Esophagus muscularis mucosa (tissue), 4 donors: ENCODE measurements at regions of chr2 and their contacts with region 1.

Region 1: DNA sequence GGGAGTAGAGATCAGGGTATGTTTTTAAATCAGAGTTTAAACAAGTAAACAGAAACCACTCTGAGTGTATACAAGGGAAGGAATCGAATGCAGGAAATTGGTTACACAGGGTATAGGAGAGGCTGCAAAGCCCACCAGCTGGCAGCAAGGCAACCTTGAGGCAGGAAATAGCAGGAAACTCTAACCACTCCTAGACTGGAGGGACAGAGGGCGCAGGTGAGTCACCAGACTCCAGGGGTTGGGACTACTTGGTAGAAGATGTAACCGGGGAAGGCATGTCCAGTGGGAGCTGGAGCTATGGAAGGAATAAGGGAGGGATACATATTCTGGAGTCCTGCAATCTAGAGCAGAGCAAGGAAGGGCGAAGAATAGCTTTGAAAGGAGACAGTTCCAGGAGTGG is 152.3 kb downstream of the MEIS1 start:
- DNase-seq: no peak
- H3K4me3 ChIP-seq: no peak overlapping the region
- H3K27ac ChIP-seq: peak overlapping the region in 1 of 4 donors; percentile 28
- H3K4me1 ChIP-seq: peaks cover 0 to 34% (median 4%) of the 10 kb centered on the region in 4 donors
- H3K27me3 ChIP-seq: peaks cover 0 to 9% (median 5%) of the 10 kb centered on the region in 4 donors
- CTCF ChIP-seq: no peak
- EP300 ChIP-seq: no peak
- POLR2A ChIP-seq: no peak

Region 2: GRCh38 chr2:66633631-66634030 is 46.4 kb after region 1 on chr2:
- intact Hi-C with region 1: no loop called
- DNase-seq: no peak
- H3K4me3 ChIP-seq: no peak overlapping the region
- H3K27ac ChIP-seq: no peak overlapping the region
- H3K4me1 ChIP-seq: peaks cover 0 to 6% (median 2%) of the 10 kb centered on the region in 4 donors
- H3K27me3 ChIP-seq: no peaks in the 10 kb centered on the region
- CTCF ChIP-seq: no peak
- EP300 ChIP-seq: peak; percentile 44
- POLR2A ChIP-seq: no peak

Region 3: DNA sequence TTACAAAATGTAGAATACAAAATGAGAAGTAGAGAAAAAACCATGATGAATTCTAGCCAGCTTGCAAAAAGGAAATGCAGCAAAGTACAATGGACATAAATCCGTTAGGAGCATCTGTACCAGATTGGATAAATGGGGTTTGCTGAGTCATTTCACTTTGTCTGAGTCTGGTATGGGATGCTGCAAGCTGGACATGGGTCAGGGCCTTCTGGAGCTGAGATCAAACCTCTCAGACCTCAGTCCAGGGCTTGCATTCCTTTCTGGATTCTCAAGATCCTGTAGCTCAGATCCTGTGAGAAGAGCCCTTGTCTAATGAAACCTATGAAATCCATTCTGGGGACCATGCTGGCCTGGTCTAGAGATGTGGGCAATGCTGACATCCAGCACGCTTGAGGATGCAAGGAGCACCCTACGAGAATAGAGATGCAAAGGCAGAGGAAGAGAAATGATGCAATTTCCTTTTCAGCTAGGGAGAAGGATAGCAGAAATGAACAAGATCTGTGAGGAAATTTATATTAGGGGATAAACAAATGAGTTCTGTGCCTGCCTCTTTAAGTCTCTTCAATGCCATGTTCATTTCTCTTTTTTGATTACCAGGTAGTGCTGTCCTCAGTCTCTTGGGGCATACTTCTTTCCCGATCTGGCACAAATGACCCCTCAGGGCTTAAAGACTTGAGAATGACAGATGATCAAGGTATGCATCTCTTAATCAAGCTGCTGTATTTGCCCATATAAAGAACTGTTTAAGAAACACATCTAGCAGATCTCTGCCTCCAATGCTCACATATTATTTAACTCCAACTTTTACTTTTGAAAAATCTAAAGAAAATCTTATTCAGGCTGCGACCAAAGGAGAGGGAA is 78.1 kb after region 1 on chr2:
- intact Hi-C with region 1: no loop called
- DNase-seq: no peak
- H3K4me3 ChIP-seq: no peak overlapping the region
- H3K27ac ChIP-seq: no peak overlapping the region
- H3K4me1 ChIP-seq: no peaks in the 10 kb centered on the region
- H3K27me3 ChIP-seq: no peaks in the 10 kb centered on the region
- CTCF ChIP-seq: no peak
- EP300 ChIP-seq: no peak
- POLR2A ChIP-seq: no peak

Region 4: GRCh38 chr2:66692521-66693054 is 105.4 kb after region 1 on chr2:
- intact Hi-C with region 1: loop called (anchors 1 kb)
- DNase-seq: no peak
- H3K4me3 ChIP-seq: peak overlapping the region; percentile 41 to 52 (median 49)
- H3K27ac ChIP-seq: peak overlapping the region; percentile 78 to 85 (median 84)
- H3K4me1 ChIP-seq: peaks cover 0 to 68% (median 44%) of the 10 kb centered on the region in 4 donors
- H3K27me3 ChIP-seq: no peaks in the 10 kb centered on the region
- CTCF ChIP-seq: no peak
- EP300 ChIP-seq: no peak
- POLR2A ChIP-seq: no peak

Region 5: GRCh38 chr2:66862886-66863650 is 275.9 kb after region 1 on chr2:
- intact Hi-C with region 1: loop called (anchors 10 kb)
- DNase-seq: no peak
- H3K4me3 ChIP-seq: peak overlapping the region in 2 of 4 donors; percentile 6 to 24
- H3K27ac ChIP-seq: peak overlapping the region; percentile 70 to 83 (median 81)
- H3K4me1 ChIP-seq: peaks cover 0 to 58% (median 46%) of the 10 kb centered on the region in 4 donors
- H3K27me3 ChIP-seq: no peaks in the 10 kb centered on the region
- CTCF ChIP-seq: no peak
- EP300 ChIP-seq: no peak
- POLR2A ChIP-seq: no peak